CD4-positive, alpha-beta T cell (primary cell): ENCODE measurements at regions of chr5 and their contacts with region 1.

Region 1: DNA sequence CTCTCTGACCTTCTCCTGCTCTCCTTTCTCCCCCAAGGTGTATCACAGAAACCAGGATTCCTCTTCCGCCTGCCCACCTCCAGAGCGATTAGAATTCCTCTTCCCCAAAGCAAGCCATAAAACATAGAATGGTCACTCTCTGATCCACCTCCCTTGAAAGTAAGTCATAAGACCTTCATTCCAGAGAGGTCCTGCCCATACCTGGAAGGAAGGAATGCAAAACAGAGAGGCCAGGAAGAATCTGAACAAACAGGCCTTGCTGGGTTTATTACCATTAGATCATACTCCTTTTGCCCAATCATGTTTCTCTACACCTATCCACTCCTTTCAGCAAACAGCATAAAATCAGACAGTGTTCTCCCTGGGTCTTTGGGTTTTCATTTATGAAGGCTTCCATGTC is 21.0 kb downstream of the CDKL3 start:
- DNase-seq: no peak
- ATAC-seq: no peak
- H3K4me3 ChIP-seq: no peak overlapping the region
- H3K4me3 Mint-ChIP-seq: no peak overlapping the region
- H3K27ac ChIP-seq: no peak overlapping the region
- H3K27ac Mint-ChIP-seq: no peak overlapping the region
- H3K4me1 ChIP-seq: no peaks in the 10 kb centered on the region
- H3K4me1 Mint-ChIP-seq: no peaks in the 10 kb centered on the region
- H3K27me3 ChIP-seq: no peaks in the 10 kb centered on the region
- H3K27me3 Mint-ChIP-seq: no peaks in the 10 kb centered on the region
- CTCF ChIP-seq: no peak

Region 2: GRCh38 chr5:134312796-134313195 is 33.2 kb before region 1 on chr5:
- CTCF ChIA-PET with region 1: no interaction called
- POLR2A ChIA-PET with region 1: no interaction called
- intact Hi-C with region 1: loop called in 1 of 2 experiments (anchors 5 kb)
- DNase-seq: no peak
- ATAC-seq: no peak
- H3K4me3 ChIP-seq: no peak overlapping the region
- H3K4me3 Mint-ChIP-seq: no peak overlapping the region
- H3K27ac ChIP-seq: no peak overlapping the region
- H3K27ac Mint-ChIP-seq: no peak overlapping the region
- H3K4me1 ChIP-seq: no peaks in the 10 kb centered on the region
- H3K4me1 Mint-ChIP-seq: no peaks in the 10 kb centered on the region
- H3K27me3 ChIP-seq: no peaks in the 10 kb centered on the region
- H3K27me3 Mint-ChIP-seq: no peaks in the 10 kb centered on the region
- CTCF ChIP-seq: no peak

Region 3: GRCh38 chr5:134380346-134380745 is 34.4 kb after region 1 on chr5:
- CTCF ChIA-PET with region 1: no interaction called
- POLR2A ChIA-PET with region 1: no interaction called
- intact Hi-C with region 1: no loop called
- DNase-seq: peak in 2 of 14 experiments; percentile 26 to 39
- ATAC-seq: peak; percentile 67
- H3K4me3 ChIP-seq: no peak overlapping the region
- H3K4me3 Mint-ChIP-seq: peak overlapping the region; percentile 49
- H3K27ac ChIP-seq: no peak overlapping the region
- H3K27ac Mint-ChIP-seq: peak overlapping the region; percentile 70
- H3K4me1 ChIP-seq: peaks cover 9% of the 10 kb centered on the region
- H3K4me1 Mint-ChIP-seq: peaks cover 58% of the 10 kb centered on the region
- H3K27me3 ChIP-seq: no peaks in the 10 kb centered on the region
- H3K27me3 Mint-ChIP-seq: no peaks in the 10 kb centered on the region
- CTCF ChIP-seq: no peak